HEK293 (cell line): ENCODE measurements at regions of chr6 and their contacts with region 1.

Region 1: DNA sequence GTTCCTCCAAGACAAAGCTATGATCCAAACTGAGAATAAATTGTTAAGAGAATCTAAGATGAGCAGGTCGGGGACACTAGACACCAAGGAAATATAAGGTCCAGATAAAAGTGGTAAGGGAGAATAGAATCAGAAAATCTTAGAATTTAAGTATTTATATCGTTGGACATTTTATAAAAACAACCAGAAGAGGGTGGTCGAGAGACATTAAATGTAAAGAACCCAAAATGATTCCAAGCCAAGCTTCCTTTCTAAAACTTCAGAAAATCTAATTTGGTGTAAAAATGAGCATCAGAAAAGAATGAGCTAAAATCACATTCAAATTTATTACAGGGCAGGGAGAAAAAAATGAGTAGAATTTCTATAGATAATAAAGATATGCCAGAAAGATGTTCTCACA is 97.8 kb upstream of the OGFRL1 start:
- H3K4me3 ChIP-seq: no peak overlapping the region
- H3K27ac ChIP-seq: no peak overlapping the region
- H3K4me1 ChIP-seq: no peaks in the 10 kb centered on the region
- CTCF ChIP-seq: no peak

Region 2: DNA sequence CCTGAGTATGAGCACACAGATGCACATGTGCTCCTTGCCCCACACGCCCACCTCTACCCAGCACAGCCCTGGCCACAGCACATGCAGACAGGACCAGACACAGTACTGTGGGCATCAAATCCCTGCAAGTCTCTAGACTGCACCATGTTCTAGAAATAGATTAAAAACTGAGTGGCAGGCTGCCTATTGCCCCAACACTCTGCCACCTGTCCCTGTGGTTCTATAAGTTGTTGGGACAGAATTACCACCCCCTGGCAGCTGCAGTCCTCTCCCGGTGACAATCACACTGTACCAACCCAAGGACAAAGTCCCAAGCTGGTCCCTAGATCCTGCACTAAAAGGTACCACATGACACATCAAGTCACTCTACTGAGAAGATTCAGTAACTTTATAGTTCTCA is 304.1 kb before region 1 on chr6:
- CTCF ChIA-PET with region 1: no interaction called
- POLR2A ChIA-PET with region 1: no interaction called
- H3K4me3 ChIP-seq: no peak overlapping the region
- H3K27ac ChIP-seq: no peak overlapping the region
- H3K4me1 ChIP-seq: no peaks in the 10 kb centered on the region
- CTCF ChIP-seq: no peak

Region 3: DNA sequence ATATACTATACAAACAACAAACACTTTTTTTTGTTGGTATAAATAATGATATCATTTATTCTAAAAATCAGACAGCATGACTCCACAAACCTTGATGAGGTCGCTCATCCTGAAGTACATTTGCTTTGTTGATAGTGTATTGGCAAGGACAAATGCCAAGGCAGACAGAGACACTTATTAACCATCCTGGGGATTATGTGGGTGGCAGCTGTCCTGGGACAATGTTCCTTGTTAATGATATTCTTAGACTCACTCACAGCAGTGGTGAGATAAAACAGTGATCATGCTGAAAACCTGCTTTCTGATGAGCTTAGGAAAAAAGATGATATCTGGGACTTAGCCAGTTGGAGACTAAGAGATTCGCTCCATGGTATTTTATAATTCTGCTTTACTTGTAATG is 12.4 kb after region 1 on chr6:
- CTCF ChIA-PET with region 1: interaction called, 10 read pairs
- POLR2A ChIA-PET with region 1: no interaction called
- H3K4me3 ChIP-seq: no peak overlapping the region
- H3K27ac ChIP-seq: no peak overlapping the region
- H3K4me1 ChIP-seq: no peaks in the 10 kb centered on the region
- CTCF ChIP-seq: no peak

Region 4: DNA sequence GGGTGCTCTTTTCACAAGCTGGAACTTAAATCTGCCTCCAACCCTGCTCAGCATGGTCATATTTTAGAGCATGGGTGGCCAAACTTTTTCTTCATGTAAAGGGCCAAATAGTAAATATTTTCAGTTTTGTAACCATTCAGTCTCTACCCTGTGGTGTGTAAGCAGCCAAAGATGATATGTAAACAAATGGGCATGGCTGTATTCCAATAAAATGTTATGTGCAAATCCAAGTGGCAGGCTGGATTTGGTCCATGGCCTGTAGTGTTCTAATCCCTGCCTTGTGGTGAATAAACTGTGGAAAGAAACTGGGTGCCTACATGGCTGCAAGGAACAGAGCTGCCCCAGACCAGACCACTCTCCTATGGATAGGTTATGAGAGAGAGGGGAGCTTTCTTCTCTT is 130.5 kb after region 1 on chr6:
- CTCF ChIA-PET with region 1: interaction called, 14 read pairs
- POLR2A ChIA-PET with region 1: no interaction called
- H3K4me3 ChIP-seq: no peak overlapping the region
- H3K27ac ChIP-seq: no peak overlapping the region
- H3K4me1 ChIP-seq: no peaks in the 10 kb centered on the region
- CTCF ChIP-seq: no peak

Region 5: DNA sequence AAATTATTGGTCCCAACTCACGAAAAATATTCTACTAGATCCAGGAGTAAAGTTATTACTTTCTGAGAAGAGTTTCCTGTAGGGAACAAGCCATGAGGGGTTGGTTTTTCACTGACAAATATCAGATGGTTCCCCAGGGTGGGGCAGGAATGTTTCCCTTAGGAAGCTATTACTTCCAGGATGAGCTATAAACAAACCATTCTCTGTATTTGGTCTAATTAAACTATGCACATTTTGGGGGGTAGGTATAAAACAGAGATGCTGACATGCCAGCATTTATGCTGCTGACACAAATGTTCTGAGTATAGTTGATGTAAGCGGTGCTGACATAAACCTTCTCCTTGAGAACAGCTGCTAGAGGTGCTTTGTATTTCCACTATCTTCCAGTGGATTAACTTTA is 152.0 kb after region 1 on chr6:
- CTCF ChIA-PET with region 1: interaction called, 18 read pairs
- POLR2A ChIA-PET with region 1: no interaction called
- H3K4me3 ChIP-seq: no peak overlapping the region
- H3K27ac ChIP-seq: no peak overlapping the region
- H3K4me1 ChIP-seq: no peaks in the 10 kb centered on the region
- CTCF ChIP-seq: no peak

Region 6: DNA sequence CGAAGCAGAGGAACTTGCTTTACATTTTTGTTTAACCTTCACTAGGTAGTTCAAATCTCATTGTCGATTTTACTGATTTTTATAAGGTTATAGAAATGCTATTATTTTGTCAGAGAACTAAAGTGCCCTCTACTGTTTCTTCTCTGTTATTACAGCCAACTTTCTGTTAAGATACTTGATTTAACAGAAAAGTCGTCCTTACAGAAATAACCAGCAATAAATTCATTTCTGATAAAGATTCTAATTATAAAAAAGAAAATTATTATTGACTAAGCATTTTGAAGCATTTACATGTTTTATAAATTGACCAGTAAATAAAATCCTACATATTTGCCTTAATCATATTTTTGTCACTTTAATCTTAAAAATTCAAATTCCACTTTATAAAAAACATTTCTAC is 158.6 kb after region 1 on chr6:
- CTCF ChIA-PET with region 1: interaction called, 35 read pairs
- POLR2A ChIA-PET with region 1: no interaction called
- H3K4me3 ChIP-seq: no peak overlapping the region
- H3K27ac ChIP-seq: no peak overlapping the region
- H3K4me1 ChIP-seq: no peaks in the 10 kb centered on the region
- CTCF ChIP-seq: no peak